ENCODE measurements at regions of chr7 and their contacts with region 1.

Region 1: GRCh38 chr7:2709553-2710285 is 21.7 kb downstream of the AMZ1 start:
- DNase-seq: no peak
- H3K4me3 ChIP-seq: no peak overlapping the region
- CTCF ChIP-seq: peak; percentile 94

Region 2: DNA sequence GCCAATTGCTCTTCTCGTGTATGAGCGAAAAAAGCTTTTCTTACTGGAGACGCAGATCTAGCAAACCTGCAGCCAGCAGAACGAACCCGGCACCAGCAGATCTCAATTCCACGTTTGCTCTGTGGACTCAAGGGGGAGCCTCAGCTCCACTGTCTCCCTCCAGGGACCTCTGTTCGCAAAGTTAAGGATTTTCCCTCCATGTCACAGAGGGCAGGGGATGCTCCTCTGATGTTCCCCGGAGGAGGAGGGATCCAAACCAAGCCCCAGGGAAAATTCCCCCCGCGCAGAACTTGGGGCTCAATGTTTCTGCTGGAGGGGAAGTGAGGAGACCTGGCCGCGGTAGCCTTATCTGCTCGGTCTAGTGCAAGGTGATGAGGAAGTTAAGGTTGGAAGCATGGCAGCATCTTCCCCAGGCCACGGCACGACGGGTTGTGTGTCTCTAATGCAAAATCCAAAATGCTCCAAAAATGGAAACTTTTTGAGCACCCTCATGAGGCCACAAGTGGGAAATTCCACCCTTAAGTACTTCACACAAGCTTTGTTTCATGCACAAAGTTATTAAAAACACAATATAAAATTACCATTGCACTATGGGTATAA is 141.9 kb before region 1 on chr7:
- CTCF ChIA-PET with region 1: interaction called, 16 read pairs
- POLR2A ChIA-PET with region 1: no interaction called
- DNase-seq: no peak
- H3K4me3 ChIP-seq: no peak overlapping the region
- CTCF ChIP-seq: peak; percentile 77

Region 3: DNA sequence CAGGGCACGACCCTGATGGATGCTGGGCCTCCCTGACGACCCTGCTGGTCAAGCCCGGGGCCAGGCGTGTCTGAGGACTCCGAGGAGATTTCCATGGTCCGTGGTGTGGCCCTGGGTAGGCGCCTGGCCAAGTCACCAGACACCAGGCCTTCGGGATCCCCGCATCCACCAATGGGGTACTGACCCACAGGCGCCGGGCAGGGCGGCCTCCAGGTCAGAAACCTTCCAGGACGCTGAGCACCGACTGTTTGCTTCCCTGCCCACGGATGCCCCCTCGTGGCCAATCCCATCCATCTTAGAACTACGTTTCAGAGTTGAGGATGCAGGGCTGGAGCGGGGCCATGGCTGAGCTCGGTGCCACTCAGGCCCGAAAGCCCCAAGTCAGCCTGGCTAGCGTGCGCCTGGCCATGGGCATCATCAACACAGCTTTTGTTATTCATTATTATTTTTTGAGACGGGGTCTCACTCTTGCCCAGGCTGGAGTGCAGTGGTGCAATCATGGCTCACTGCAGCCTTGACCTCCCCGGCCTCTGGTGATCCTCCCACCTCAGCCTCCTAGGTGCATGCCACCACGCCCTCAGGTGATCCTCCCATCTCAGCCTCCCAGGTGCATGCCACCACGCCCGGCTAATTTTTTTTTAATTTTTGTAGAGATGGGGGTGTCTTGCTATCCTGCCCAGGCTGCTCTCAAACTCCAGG is 28.8 kb before region 1 on chr7:
- CTCF ChIA-PET with region 1: interaction called, 25 read pairs
- POLR2A ChIA-PET with region 1: no interaction called
- DNase-seq: no peak
- H3K4me3 ChIP-seq: no peak overlapping the region
- CTCF ChIP-seq: peak; percentile 85

Region 4: DNA sequence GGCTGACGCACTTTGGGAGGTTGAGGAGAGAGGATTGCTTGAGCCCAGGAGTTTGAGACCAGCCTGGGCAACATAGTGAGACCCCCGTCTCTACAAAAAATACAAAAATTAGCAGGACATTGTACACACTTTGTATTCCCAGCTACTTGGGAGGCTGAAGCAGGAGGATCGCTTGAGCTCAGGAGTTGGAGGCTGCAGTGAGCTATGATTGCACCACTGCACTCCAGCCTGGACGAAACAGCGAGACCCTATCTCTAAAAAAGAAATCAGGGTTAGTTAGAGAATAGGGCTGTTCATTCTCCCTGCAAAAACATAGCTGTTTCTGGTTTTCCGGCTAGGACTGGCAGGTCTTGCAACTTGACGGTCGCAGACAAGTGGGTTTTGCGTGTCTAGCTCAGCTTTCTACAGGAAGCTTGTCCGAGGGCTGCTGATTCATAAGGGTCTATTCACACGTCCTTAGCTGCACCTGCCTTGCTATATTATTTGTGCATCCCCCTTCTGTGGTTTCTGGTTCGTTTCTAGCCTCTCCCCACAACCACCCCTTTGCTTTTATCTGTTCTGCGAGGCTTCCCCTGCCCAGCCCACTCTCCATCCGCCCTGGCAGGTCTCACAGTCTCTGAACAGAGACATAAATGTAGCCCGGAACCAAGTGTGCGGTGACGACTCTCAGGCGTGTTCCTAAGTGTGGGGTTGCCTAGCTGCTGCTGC is 11.0 kb before region 1 on chr7:
- CTCF ChIA-PET with region 1: interaction called, 49 read pairs
- POLR2A ChIA-PET with region 1: no interaction called
- DNase-seq: no peak
- H3K4me3 ChIP-seq: no peak overlapping the region
- CTCF ChIP-seq: no peak

Region 5: DNA sequence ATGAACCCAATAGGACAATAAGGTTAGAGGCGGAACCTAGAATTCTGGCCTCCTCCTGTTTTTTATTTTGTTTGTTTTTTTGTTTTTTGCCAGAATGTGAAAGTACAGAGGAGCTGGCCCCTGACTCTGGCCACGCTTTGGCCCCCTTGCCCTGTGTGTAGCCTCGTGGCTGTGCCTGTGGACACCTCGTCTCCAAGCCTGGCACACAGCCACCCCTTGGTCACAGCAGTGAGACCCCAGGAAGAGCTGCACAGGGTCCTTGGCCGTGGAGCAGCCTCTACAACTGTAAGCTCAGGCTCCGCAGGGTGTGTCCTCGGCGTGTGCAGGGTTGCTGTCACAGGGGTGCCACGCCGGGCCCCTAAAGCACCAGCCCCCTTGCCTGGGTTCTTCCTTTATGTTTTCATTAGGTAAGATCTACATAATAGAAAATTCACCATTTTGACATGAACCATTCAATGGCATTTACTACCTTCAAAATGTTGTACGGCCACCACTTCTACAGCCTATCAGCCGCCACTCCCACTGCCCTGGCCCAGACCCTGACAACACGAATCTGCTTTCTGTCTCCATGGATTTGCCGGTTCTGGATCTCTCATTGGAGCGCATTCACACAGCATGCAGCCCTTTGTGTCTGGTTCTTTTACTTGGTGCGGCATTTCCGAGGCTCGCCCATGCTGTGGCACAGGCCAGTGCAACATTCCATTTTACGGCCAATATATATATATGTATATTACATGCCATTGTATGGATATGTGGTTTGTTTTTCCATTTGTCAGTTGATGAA is 29.2 kb after region 1 on chr7:
- CTCF ChIA-PET with region 1: interaction called, 13 read pairs
- POLR2A ChIA-PET with region 1: no interaction called
- DNase-seq: no peak
- H3K4me3 ChIP-seq: no peak overlapping the region
- CTCF ChIP-seq: no peak

Measured in AG04449 (cell line).